ENCODE measurements at regions of chr7 and their contacts with region 1.

Region 1: DNA sequence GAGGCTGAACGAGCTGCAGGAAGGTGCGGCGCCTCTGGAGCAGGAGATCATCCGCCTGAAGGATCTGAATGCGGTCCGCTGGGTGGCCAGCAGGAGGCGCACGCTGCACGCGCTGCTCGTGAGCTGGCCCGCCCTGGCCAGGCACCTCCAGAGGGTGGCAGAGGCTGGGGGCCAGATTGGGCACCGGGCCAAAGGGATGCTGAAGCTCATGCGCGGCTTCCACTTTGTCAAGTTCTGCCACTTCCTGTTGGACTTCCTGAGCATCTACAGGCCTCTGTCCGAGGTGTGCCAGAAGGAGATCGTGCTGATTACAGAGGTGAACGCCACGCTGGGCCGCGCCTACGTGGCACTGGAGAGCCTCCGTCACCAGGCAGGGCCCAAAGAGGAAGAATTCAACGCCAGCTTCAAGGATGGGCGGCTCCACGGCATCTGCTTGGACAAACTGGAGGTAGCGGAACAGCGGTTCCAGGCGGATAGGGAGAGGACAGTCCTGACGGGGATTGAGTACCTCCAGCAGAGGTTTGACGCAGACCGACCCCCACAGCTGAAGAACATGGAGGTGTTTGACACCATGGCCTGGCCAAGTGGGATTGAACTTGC is 12.2 kb upstream of the ATP6V0E2 start:
- DNase-seq: peak; percentile 80
- ATAC-seq: peak; percentile 93
- H3K4me3 Mint-ChIP-seq: no peak overlapping the region
- H3K27ac Mint-ChIP-seq: no peak overlapping the region
- H3K4me1 Mint-ChIP-seq: peaks cover 2% of the 10 kb centered on the region
- H3K27me3 Mint-ChIP-seq: no peaks in the 10 kb centered on the region
- CTCF ChIP-seq: peak; percentile 91

Region 2: DNA sequence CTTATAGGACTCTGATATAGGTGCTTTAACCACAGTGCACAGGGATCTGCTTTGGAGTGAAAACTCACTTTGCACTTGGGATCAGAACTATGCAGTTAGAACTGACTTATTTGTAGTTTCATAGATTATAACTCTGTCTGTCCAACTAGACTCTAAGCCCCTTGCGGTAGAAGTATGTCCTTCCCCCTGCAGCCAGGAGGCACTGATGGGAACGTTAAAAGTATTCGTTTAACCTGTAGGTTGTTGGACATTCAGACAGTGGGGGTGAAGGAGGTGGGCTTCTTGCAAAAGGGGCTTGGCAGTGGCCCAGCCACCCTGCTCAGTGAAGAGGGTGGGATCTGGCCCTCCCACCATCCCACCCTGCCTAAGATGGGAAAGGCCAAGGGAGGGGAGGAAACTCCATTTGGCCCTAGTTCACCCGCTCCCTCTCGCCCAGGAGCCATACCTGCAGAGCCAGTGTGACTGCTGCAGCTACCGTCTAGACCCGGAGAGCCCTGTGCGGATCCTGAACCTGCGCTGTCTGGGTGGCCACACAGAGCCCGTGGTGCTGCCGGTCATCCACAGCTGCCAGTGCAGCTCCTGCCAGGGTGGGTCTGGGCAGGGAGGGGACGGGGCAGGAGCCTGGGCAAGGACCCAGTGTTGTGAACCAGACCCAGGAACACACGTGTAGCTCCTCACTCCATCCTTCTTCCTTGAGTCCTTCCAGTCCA is 29.1 kb before region 1 on chr7:
- CTCF ChIA-PET with region 1: interaction called, 14 read pairs
- POLR2A ChIA-PET with region 1: no interaction called
- DNase-seq: peak; percentile 10
- ATAC-seq: peak; percentile 20
- H3K4me3 Mint-ChIP-seq: no peak overlapping the region
- H3K27ac Mint-ChIP-seq: no peak overlapping the region
- H3K4me1 Mint-ChIP-seq: peaks cover 13% of the 10 kb centered on the region
- H3K27me3 Mint-ChIP-seq: peaks cover 9% of the 10 kb centered on the region
- CTCF ChIP-seq: no peak

Region 3: DNA sequence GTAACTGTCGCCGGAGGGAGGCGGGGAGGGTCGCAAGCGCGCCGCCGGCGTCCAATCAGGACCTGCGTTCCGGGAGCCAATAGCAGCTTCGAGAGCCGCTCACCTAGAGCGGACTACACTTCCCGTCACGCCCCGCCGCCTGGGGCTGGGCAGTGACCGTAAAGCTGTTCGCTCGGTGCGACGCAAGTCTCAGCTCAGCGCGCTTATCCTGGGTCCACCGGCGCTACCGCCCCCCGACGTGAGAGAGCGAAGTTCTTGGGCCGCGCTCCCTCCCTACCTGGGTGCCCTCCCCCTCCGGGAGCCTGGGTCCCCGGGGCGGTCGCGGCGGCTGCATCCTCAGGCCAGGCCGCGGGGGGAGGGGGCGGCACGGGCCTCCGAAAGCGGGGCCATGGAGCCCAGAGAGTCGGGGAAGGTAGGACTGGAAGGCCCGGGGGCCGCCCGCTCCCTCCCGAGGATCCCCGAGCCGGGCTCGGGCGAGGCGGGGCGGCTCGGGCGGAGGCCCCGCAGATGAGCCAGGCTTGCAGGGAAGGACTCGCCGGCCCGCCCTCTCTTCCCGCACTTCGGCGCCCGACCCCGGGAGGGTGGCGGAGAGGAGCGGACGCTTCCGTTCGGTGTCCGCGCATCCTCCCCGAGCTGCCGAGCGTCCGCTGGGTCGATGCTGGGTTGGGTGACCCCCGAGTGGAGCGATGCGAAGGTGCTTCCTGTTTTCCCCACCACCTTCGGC is 23.2 kb before region 1 on chr7 and contains the start of gene ZNF862:
- CTCF ChIA-PET with region 1: interaction called, 28 read pairs
- POLR2A ChIA-PET with region 1: interaction called, 6 read pairs
- DNase-seq: peak; percentile 98
- ATAC-seq: peak; percentile 97
- H3K4me3 Mint-ChIP-seq: peak within 1 kb of the TSS; percentile 78
- H3K27ac Mint-ChIP-seq: peak within 1 kb of the TSS; percentile 77; the same call in 1 of the 2 replicates
- H3K4me1 Mint-ChIP-seq: peaks cover 13% of the 10 kb centered on the region
- H3K27me3 Mint-ChIP-seq: peaks cover 27% of the 10 kb centered on the region
- CTCF ChIP-seq: no peak
- total RNA-seq, gene ZNF862: 3.6 to 6.3 TPM (median 5.8 TPM) in 3 replicates

Region 4: DNA sequence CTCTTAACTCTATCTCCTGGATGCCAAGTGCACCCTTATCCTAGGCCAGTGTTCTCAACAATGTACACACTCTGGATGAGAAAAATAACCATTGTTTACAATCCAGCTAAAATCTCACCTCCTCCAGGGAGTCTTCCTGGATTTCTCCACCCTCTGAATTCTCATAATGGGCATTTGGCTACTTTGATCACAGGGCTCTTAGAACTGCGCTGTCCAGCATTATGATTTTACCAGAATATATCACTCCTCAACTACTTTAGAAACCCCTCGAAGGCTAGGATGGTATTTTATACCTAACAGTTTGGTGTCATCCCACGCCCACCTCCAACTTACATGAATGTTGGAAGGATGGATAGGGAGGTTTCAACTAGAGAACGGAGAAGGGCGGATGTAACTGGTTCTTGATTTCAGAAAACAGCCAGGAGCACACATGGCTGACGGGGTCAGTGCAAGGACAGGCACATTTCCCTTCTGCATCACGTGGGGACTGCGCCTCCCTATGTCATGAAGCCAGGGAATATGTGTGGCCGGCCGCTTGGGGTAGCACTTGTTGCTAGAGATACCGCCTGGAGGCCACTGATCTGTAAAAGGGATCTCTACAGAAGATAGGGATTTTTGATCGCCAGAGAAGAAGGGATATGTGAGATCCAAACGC is 11.0 kb after region 1 on chr7:
- CTCF ChIA-PET with region 1: interaction called, 42 read pairs
- POLR2A ChIA-PET with region 1: no interaction called
- DNase-seq: peak; percentile 49
- ATAC-seq: peak; percentile 55
- H3K4me3 Mint-ChIP-seq: peak overlapping the region; percentile 74
- H3K27ac Mint-ChIP-seq: peak overlapping the region; percentile 70
- H3K4me1 Mint-ChIP-seq: peaks cover 16% of the 10 kb centered on the region
- H3K27me3 Mint-ChIP-seq: peaks cover 26% of the 10 kb centered on the region
- CTCF ChIP-seq: no peak

Region 5: DNA sequence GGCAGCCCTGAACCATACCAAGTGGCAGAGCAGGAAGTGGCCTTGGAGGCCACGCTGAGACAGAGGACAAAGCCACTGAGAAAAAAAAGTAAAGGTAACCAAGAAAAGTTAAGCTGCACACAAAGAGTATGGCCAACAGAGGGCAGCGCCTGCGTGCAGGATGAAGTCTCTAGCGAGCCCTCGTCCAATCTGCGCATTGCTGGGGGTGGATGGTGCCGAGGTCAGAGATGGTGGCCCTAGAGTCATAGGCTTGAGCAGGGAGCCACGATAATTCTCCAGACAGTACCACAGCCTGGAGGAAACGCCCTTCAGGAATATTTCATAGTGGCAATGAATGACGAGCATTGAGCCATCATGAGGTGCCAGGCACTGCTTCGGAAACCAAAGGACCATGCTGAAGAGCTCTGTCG is 21.9 kb after region 1 on chr7:
- CTCF ChIA-PET with region 1: interaction called, 52 read pairs
- POLR2A ChIA-PET with region 1: no interaction called
- DNase-seq: peak; percentile 78
- ATAC-seq: peak; percentile 85
- H3K4me3 Mint-ChIP-seq: no peak overlapping the region
- H3K27ac Mint-ChIP-seq: no peak overlapping the region
- H3K4me1 Mint-ChIP-seq: peaks cover 17% of the 10 kb centered on the region
- H3K27me3 Mint-ChIP-seq: no peaks in the 10 kb centered on the region
- CTCF ChIP-seq: peak; percentile 61